Sciatic nerve (tissue), 2 donors: ENCODE measurements at regions of chr10 and their contacts with region 1.

Region 1: GRCh38 chr10:73644015-73644743 is 2.9 kb upstream of the MYOZ1 start:
- DNase-seq: peak; percentile 69
- ATAC-seq: peak; percentile 70

Region 2: GRCh38 chr10:73534857-73535256 is 109.3 kb before region 1 on chr10:
- intact Hi-C with region 1: loop called (anchors 5 kb)
- DNase-seq: no peak
- ATAC-seq: no peak